CD8-positive, alpha-beta memory T cell (primary cell): ENCODE measurements at regions of chr5 and their contacts with region 1.

Region 1: DNA sequence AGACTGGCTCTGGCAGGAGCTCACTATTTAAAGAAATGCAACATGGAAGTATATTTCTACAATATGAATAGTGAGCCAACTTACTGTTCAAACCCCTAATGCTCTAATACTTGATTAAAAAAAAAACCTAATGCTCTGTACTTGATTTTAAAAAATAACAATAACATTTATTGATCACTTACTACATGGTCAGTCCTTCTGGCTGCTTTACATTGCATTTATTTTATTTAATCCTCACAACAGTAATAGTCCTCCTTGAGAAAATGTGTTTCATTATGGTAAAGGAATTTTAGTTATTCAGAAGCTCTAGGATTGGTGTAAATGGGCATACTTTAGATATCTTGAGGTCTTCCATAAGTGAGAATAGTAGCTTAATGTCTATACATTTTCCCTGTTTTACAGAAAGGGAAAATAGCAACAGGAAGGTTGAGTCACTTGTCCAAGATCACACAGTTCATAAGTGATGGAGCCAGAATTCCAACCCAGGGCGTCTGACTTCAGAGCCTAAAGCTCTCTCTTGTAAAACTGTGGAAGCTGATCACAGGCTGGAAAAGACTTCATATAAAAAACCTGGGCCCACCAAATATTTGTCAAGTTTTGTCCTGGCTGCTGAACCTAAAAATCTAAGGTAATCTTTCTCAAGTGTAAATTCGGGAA is 1.0 kb downstream of the STARD4 start:
- DNase-seq: no peak
- H3K4me3 ChIP-seq: peak overlapping the region; percentile 70
- H3K4me3 Mint-ChIP-seq: peak overlapping the region; percentile 96 to 100 (median 98)
- H3K27ac ChIP-seq: peak overlapping the region; percentile 87
- H3K27ac Mint-ChIP-seq: peak overlapping the region; percentile 76 to 99 (median 95)
- H3K4me1 ChIP-seq: peaks cover 25% of the 10 kb centered on the region
- H3K4me1 Mint-ChIP-seq: peaks cover 40 to 62% (median 56%) of the 10 kb centered on the region in 3 donors
- H3K27me3 ChIP-seq: no peaks in the 10 kb centered on the region
- H3K27me3 Mint-ChIP-seq: no peaks in the 10 kb centered on the region

Region 2: DNA sequence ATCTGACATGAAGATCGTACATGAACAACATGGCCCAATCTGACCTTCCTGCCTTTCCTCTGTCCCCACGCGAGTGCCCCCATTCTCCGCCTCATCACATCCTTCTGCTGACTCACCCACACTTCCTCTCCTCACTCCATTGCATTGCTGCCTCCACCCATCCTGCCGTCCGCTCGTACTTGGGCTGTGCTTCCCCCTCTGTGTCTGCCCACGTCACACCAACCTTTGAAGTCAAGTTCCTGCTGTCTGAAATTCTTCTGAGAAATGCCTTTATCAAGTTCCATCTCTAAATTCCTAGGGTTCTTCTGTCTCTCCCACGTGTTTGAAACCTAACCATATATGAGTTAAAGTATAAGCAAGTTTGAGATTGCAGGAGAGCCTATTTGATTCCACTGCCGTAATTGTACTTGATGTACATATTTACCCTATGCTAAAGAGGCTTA is 19.0 kb after region 1 on chr5:
- CTCF ChIA-PET with region 1: interaction called, 10 read pairs
- POLR2A ChIA-PET with region 1: interaction called, 3 read pairs
- DNase-seq: peak; percentile 67 to 90 (median 82)
- H3K4me3 ChIP-seq: peak overlapping the region; percentile 38
- H3K4me3 Mint-ChIP-seq: peak overlapping the region; percentile 23 to 65 (median 53)
- H3K27ac ChIP-seq: peak overlapping the region; percentile 34
- H3K27ac Mint-ChIP-seq: peak overlapping the region; percentile 60 to 95 (median 82)
- H3K4me1 ChIP-seq: peaks cover 12% of the 10 kb centered on the region
- H3K4me1 Mint-ChIP-seq: peaks cover 14 to 19% (median 17%) of the 10 kb centered on the region in 3 donors
- H3K27me3 ChIP-seq: no peaks in the 10 kb centered on the region
- H3K27me3 Mint-ChIP-seq: peaks cover 3 to 13% of the 10 kb centered on the region in 2 donors